ENCODE measurements at regions of chr2 and their contacts with region 1.

Region 1: GRCh38 chr2:161136696-161137324 is 23.4 kb upstream of the TANK start:
- DNase-seq: no peak
- ATAC-seq: peak; percentile 88
- H3K4me3 Mint-ChIP-seq: peak overlapping the region; percentile 96
- H3K27ac Mint-ChIP-seq: peak overlapping the region; percentile 99
- H3K4me1 Mint-ChIP-seq: peaks cover 50% of the 10 kb centered on the region
- H3K27me3 Mint-ChIP-seq: no peaks in the 10 kb centered on the region
- CTCF ChIP-seq: no peak

Region 2: DNA sequence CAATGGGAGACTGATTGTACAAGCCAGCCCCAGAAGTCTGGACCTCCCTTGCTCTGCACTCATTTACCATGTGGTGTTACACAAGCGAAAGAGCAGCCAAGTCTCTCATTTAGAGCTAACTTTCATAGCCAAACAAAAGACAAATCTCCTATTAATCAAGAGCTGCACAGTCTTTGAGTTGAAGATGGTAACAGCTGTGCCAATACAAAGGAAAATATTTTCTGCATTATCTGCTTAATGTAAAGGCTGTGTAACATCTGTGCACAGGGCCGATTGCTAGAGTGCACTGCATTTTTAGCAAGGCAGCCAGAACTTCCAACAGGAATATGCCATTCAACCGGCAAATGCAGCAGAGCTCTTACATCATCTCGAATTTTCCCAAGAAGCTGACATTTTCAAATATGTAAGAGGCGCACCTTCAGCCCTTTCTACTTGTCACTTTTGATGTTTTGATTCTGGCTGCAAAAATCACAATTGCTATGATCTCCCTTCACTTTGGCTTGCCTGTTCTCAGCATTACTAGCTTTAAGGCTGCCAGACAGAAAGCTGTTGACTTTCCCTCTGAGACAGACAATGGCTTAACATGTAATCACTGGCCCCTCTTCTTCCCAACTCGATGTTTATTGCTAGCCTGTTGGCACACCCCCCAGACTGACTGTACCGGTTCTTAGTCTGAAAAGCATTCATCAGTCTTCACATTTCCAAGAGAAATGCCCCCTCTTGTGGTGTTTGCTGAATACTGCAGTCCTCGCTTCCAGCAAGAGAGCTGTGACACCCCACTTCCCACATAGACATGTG is 73.5 kb before region 1 on chr2:
- CTCF ChIA-PET with region 1: interaction called, 10 read pairs
- POLR2A ChIA-PET with region 1: interaction called, 5 read pairs
- intact Hi-C with region 1: loop called (anchors 1 kb)
- DNase-seq: peak; percentile 18
- ATAC-seq: peak; percentile 93
- H3K4me3 Mint-ChIP-seq: no peak overlapping the region
- H3K27ac Mint-ChIP-seq: no peak overlapping the region
- H3K4me1 Mint-ChIP-seq: peaks cover 4% of the 10 kb centered on the region
- H3K27me3 Mint-ChIP-seq: no peaks in the 10 kb centered on the region
- CTCF ChIP-seq: peak; percentile 94

Region 3: GRCh38 chr2:161090411-161090810 is 46.4 kb before region 1 on chr2:
- CTCF ChIA-PET with region 1: no interaction called
- POLR2A ChIA-PET with region 1: interaction called, 12 read pairs
- intact Hi-C with region 1: loop called (anchors 1 kb)
- DNase-seq: no peak
- ATAC-seq: no peak
- H3K4me3 Mint-ChIP-seq: peak overlapping the region; percentile 76
- H3K27ac Mint-ChIP-seq: peak overlapping the region; percentile 83
- H3K4me1 Mint-ChIP-seq: peaks cover 48% of the 10 kb centered on the region
- H3K27me3 Mint-ChIP-seq: no peaks in the 10 kb centered on the region
- CTCF ChIP-seq: no peak

Region 4: DNA sequence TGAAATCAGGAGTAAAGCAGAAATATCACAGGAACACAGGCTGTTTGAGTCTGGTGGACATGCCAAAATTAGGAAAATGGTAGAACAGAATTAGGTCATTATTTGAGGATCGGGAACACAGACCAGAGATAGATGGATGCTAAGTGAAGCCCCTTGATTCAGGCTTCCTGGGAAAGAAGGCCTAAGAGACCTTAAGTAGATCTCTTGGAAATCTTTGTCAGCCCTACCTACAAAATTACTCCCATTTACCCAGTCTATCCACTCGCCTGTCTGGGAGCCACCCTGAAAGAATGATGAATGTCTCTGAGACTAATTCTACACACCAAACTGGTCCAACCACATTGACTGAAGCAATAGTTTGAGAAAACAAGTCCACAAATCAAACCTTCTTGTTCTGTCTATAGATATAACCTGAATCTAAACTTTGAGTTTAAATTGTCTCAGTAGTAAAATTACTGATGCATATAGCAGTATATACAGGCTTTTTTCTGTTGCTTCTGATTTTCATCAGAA is 13.2 kb before region 1 on chr2:
- CTCF ChIA-PET with region 1: interaction called, 3 read pairs
- POLR2A ChIA-PET with region 1: interaction called, 5 read pairs
- intact Hi-C with region 1: loop called (anchors 1 kb)
- DNase-seq: no peak
- ATAC-seq: no peak
- H3K4me3 Mint-ChIP-seq: no peak overlapping the region
- H3K27ac Mint-ChIP-seq: no peak overlapping the region
- H3K4me1 Mint-ChIP-seq: peaks cover 36% of the 10 kb centered on the region
- H3K27me3 Mint-ChIP-seq: no peaks in the 10 kb centered on the region
- CTCF ChIP-seq: no peak

Region 5: DNA sequence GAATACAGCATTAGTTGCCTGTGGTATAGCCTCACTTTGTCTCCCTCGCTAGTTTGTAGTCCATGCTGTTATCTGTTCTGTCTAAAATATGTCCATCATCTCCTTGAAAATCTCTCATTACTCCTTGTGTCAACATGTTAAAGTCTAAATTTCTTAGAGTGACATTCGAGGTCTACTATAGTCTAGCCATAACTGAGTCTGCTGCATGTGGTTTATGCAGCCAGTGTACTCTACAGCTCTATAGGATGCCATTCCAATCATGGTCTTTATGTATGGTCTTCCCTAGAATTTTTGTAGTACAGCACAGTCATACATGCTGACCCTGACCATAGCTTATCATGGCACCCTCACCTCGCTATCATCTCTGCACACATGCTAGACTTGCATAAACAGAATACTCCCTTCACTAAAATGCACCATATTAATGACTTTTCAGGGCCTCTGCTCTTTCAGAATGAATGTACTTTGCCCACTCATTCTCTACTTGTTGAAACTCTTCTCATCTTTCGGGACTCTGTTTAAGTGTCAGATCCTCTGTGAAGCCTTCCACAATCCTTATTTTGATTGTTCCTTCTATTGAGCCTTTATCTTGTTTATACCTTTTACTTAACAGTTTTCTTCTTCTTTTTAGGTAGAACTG is 36.2 kb after region 1 on chr2:
- CTCF ChIA-PET with region 1: no interaction called
- POLR2A ChIA-PET with region 1: interaction called, 6 read pairs
- intact Hi-C with region 1: loop called (anchors 5 kb)
- DNase-seq: no peak
- ATAC-seq: no peak
- H3K4me3 Mint-ChIP-seq: peak overlapping the region; percentile 21
- H3K27ac Mint-ChIP-seq: peak overlapping the region; percentile 63
- H3K4me1 Mint-ChIP-seq: peaks cover 92% of the 10 kb centered on the region
- H3K27me3 Mint-ChIP-seq: no peaks in the 10 kb centered on the region
- CTCF ChIP-seq: no peak